MCF 10A (cell line): ENCODE measurements at regions of chr10 and their contacts with region 1.

Region 1: DNA sequence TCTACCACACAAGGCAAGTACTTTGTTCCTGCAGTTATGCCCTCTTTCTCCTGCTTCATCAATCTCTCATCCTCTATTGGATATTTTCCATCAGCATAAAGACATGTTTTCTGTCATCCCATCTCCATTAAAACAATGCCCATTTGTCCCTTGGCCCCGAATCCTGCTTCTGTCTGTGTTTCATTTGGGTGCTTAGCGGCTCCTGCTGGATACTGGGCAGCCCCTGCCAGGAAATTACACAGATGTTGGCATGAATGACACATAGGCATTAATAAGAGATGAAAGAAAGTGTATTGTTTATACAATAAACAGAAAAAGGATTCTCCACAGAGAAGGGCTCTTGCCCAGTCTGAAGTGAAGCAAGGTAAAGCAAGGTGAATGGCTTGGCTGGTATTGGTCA is 765.3 kb downstream of the REEP3 start:
- DNase-seq: no peak
- H3K4me3 Mint-ChIP-seq: no peak overlapping the region
- H3K27ac Mint-ChIP-seq: no peak overlapping the region
- H3K4me1 Mint-ChIP-seq: no peaks in the 10 kb centered on the region
- H3K27me3 Mint-ChIP-seq: no peaks in the 10 kb centered on the region
- CTCF ChIP-seq: no peak

Region 2: DNA sequence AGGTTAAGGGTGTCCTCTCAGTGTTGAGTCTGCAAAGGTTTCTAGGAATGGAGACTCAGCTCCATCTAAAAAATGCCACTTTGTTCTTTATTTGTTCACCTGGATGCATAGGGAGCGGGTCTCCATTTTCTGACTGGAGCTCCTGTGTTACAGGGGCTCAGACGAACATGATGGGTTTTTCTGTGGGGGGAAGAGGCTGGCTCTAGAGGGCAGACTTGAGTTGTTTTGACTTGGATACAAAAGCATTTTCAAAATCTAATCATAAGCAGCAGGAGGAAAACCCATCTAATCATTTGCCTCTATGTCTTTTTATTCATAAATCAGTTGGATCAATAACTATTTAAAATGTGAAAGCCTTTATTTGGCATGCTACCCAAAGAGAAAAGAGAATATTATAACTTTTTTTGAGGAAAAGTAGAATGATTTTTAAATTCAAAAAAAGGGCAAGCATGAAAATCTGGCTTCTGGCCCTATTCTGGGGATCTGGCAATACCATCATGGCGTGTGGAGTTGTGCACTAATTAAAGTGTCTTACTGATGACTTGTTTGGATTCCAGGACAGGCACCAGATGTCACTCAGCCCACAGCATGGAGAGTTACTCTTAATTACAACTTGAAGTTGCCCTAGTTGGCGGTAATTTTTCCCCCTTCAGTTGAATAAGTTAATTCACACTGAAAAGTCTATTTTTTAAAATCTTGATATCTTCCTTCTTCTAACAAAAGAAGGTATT is 170.5 kb before region 1 on chr10:
- CTCF ChIA-PET with region 1: interaction called, 3 read pairs
- POLR2A ChIA-PET with region 1: no interaction called
- intact Hi-C with region 1: loop called (anchors 5 kb)
- DNase-seq: peak; percentile 46
- H3K4me3 Mint-ChIP-seq: no peak overlapping the region
- H3K27ac Mint-ChIP-seq: no peak overlapping the region
- H3K4me1 Mint-ChIP-seq: no peaks in the 10 kb centered on the region
- H3K27me3 Mint-ChIP-seq: no peaks in the 10 kb centered on the region
- CTCF ChIP-seq: peak; percentile 46

Region 3: DNA sequence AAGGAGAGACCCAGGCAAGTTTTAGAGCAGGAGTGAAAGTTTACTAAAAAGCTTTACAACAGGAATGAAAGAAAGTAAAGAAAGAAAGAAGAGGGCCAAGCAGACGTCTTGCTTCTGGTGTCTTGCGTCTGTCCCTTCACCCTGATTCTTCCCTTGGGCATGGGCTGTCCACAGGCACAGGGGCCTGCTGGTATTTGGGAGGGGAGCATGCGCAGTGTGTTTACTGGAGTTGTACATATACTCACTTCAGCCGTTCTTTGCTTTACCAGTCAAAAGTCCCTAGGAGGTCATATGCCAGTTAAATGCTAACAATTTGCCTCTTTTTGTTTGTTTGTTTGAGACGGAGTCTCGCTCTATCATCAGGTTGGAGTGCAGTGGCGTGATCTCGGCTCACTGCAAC is 110.6 kb after region 1 on chr10:
- CTCF ChIA-PET with region 1: no interaction called
- POLR2A ChIA-PET with region 1: no interaction called
- intact Hi-C with region 1: no loop called
- DNase-seq: no peak
- H3K4me3 Mint-ChIP-seq: no peak overlapping the region
- H3K27ac Mint-ChIP-seq: no peak overlapping the region
- H3K4me1 Mint-ChIP-seq: peaks cover 16% of the 10 kb centered on the region
- H3K27me3 Mint-ChIP-seq: no peaks in the 10 kb centered on the region
- CTCF ChIP-seq: no peak